Panc1 (cell line): ENCODE measurements at regions of chr14 and their contacts with region 1.

Region 1: GRCh38 chr14:76050797-76051392 is 65.3 kb downstream of the IFT43 start:
- DNase-seq: peak; percentile 17
- ATAC-seq: peak; percentile 75
- H3K4me3 ChIP-seq: no peak overlapping the region
- H3K27ac ChIP-seq: no peak overlapping the region
- H3K4me1 ChIP-seq: no peaks in the 10 kb centered on the region
- H3K27me3 ChIP-seq: no peaks in the 10 kb centered on the region
- CTCF ChIP-seq: peak; percentile 73

Region 2: DNA sequence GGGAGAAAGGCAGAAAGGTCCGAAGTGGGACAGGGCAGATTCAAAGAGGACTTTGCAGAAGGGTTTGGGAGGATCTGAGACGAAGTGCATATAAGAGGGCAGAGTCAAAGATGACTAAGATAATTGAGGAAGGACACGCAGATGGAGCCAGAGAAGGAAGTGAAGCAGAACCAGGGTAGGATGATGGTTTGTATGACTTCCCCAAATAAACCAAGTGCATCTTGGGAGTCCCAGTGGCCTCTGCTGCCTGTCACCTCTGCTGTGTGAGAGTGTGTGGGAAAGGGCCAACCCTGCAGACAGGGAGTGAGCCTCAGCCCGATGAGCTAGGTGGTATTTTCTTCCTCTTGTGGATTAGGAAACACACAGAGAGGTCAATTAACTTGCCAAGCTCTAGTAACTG is 435.7 kb before region 1 on chr14:
- CTCF ChIA-PET with region 1: no interaction called
- POLR2A ChIA-PET with region 1: no interaction called
- in situ Hi-C with region 1: no loop called
- intact Hi-C with region 1: no loop called
- DNase-seq: no peak
- ATAC-seq: no peak
- H3K4me3 ChIP-seq: no peak overlapping the region
- H3K27ac ChIP-seq: no peak overlapping the region
- H3K4me1 ChIP-seq: no peaks in the 10 kb centered on the region
- H3K27me3 ChIP-seq: no peaks in the 10 kb centered on the region
- CTCF ChIP-seq: no peak

Region 3: GRCh38 chr14:76352639-76353281 is 301.9 kb after region 1 on chr14:
- CTCF ChIA-PET with region 1: interaction called, 7 read pairs
- POLR2A ChIA-PET with region 1: no interaction called
- in situ Hi-C with region 1: no loop called
- intact Hi-C with region 1: loop called (anchors 10 kb)
- DNase-seq: no peak
- ATAC-seq: peak; percentile 86
- H3K4me3 ChIP-seq: peak overlapping the region in 1 of 2 experiments; percentile 31; a peak in 2 of 4 replicates
- H3K27ac ChIP-seq: no peak overlapping the region
- H3K4me1 ChIP-seq: no peaks in the 10 kb centered on the region
- H3K27me3 ChIP-seq: peaks cover 2% of the 10 kb centered on the region; the same call in 1 of the 2 replicates
- CTCF ChIP-seq: peak; percentile 91

Region 4: DNA sequence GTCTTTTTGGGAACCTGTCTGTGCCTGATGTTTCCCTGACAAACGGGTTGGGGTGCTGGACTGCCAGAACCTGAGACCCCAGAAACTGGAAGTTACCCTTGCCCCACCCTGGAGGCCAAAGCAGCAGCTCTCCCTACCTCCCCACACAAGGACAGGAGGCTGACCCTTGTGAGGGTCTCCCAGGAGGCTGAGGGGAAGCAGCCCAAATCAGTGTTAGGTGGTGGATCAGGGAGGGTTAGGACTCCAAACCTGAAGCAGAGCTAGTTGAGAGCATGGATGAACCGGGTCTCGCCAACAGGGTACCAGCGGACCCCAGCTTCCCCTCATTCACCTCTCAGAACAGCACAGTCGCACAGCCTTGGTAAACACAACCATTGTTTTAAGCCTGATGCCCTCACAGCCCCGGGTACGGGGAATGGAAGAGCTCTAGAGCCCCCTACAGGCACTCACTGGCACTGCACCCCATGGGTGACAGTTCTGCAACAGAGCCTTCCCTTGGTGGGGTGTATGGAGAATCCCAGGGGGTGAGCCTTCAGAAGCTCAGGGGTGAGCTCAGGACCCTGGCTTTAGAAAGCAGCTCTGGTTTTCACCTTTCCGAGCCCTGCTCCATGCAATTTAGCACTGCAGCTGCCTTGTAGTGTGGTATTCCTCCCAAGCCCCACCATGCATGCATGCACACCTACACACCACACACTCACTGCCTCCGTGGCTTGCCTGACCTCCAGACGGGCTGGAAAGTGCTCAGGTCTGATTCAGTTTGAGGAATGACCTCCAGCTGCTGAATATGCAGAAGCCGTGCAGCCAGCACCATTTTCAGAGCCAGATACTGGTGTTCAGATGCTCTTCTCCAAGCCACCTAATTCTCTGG is 336.3 kb after region 1 on chr14:
- CTCF ChIA-PET with region 1: no interaction called
- POLR2A ChIA-PET with region 1: no interaction called
- in situ Hi-C with region 1: no loop called
- intact Hi-C with region 1: loop called (anchors 5 kb)
- DNase-seq: peak; percentile 52
- ATAC-seq: peak; percentile 98
- H3K4me3 ChIP-seq: no peak overlapping the region
- H3K27ac ChIP-seq: no peak overlapping the region
- H3K4me1 ChIP-seq: no peaks in the 10 kb centered on the region
- H3K27me3 ChIP-seq: peaks cover 16% of the 10 kb centered on the region
- CTCF ChIP-seq: peak; percentile 92

Region 5: DNA sequence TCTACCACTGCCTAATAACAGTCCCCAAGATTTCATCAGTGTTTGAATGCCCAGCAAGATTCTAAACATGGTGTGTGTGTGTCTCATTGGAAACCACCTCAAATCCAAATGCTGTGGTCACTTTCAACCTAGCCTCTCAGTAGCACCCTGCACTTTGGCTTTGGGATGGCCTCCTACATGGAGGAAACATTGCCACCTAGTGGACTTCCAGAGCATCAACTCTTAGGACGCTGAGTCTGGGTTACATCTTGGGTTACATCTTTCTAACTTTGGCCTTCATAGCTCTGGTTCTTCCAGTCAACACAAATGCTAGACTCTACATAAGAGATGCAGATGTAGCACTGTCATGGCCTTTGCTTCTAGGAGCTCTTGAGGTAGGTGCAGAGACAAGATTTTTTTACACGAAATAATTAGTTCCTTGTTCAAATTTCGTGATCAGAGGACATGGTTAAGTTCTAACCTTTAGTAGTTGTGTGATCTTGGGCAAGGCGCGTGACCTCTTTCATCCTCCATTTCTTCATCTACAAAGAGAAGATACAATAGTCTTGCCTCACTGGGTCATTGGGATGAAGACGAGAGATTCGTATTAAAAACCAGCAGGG is 596.9 kb after region 1 on chr14:
- CTCF ChIA-PET with region 1: no interaction called
- POLR2A ChIA-PET with region 1: no interaction called
- in situ Hi-C with region 1: no loop called
- intact Hi-C with region 1: loop called (anchors 5 kb)
- DNase-seq: peak; percentile 50
- ATAC-seq: peak; percentile 74; the same call in 1 of the 2 replicates
- H3K4me3 ChIP-seq: no peak overlapping the region
- H3K27ac ChIP-seq: no peak overlapping the region
- H3K4me1 ChIP-seq: no peaks in the 10 kb centered on the region
- H3K27me3 ChIP-seq: no peaks in the 10 kb centered on the region; the same call in 1 of the 2 replicates
- CTCF ChIP-seq: peak; percentile 83